ENCODE measurements at regions of chr14 and their contacts with region 1.

Region 1: GRCh38 chr14:51780006-51780692 is 80.3 kb upstream of the GNG2 start:
- DNase-seq: peak; percentile 77
- H3K4me3 Mint-ChIP-seq: no peak overlapping the region
- H3K27ac Mint-ChIP-seq: no peak overlapping the region
- H3K4me1 Mint-ChIP-seq: peaks cover 23% of the 10 kb centered on the region
- H3K27me3 Mint-ChIP-seq: no peaks in the 10 kb centered on the region
- CTCF ChIP-seq: peak; percentile 68

Region 2: DNA sequence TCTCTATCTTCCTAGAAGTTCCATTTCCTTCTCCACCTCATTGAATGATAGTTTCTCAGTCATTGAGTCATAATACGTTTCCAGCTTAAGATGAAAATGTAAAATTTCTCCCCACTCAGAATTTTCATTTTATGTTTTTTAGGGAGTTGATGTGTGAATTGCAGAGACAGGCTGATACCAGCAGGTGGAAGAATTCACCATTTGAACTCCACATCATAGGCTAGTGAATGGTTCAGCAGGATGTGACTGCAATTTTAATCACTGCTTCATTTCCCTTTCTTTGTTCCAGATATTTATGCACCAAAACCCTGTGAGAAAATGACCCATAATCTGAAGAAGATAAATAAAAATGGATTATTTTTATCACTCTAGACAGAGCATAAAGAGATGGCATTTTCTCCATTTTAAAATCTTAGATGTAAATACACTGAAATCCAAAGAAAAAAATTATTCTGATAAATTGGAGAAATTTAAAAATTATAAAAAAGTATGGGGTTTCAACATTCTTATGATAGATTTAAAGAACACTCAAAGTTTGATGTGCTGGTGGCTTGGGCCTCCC is 825.3 kb before region 1 on chr14:
- CTCF ChIA-PET with region 1: interaction called, 3 read pairs
- POLR2A ChIA-PET with region 1: no interaction called
- intact Hi-C with region 1: loop called (anchors 1 kb)
- DNase-seq: peak; percentile 67
- H3K4me3 Mint-ChIP-seq: peak overlapping the region; percentile 24
- H3K27ac Mint-ChIP-seq: peak overlapping the region; percentile 97
- H3K4me1 Mint-ChIP-seq: peaks cover 24% of the 10 kb centered on the region
- H3K27me3 Mint-ChIP-seq: no peaks in the 10 kb centered on the region
- CTCF ChIP-seq: peak; percentile 66

Region 3: DNA sequence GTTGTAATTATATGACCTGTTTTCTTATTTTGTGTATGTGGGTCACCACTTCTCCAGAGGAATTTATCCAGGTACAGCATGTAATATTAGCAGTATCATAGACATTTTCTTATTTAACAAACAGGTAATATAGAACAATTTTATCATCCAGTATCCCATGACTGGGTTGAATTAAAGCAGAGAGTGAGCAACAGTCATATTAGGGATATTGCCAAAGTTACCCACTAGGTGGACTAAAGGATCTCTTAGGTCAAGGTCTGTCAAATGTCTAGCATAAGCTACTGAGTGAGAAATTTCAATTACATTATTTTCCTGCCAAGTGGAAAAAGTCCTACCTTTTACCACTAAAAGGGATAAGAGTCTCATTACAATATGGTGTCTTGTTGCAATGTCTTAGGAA is 623.1 kb before region 1 on chr14:
- CTCF ChIA-PET with region 1: no interaction called
- POLR2A ChIA-PET with region 1: no interaction called
- intact Hi-C with region 1: loop called (anchors 5 kb)
- DNase-seq: peak; percentile 44
- H3K4me3 Mint-ChIP-seq: no peak overlapping the region
- H3K27ac Mint-ChIP-seq: no peak overlapping the region
- H3K4me1 Mint-ChIP-seq: no peaks in the 10 kb centered on the region
- H3K27me3 Mint-ChIP-seq: no peaks in the 10 kb centered on the region
- CTCF ChIP-seq: peak; percentile 33

Region 4: GRCh38 chr14:51283402-51284085 is 496.6 kb before region 1 on chr14:
- CTCF ChIA-PET with region 1: interaction called, 283 read pairs
- POLR2A ChIA-PET with region 1: interaction called, 18 read pairs
- intact Hi-C with region 1: loop called (anchors 1 kb)
- DNase-seq: peak; percentile 84
- H3K4me3 Mint-ChIP-seq: no peak overlapping the region
- H3K27ac Mint-ChIP-seq: no peak overlapping the region
- H3K4me1 Mint-ChIP-seq: peaks cover 12% of the 10 kb centered on the region
- H3K27me3 Mint-ChIP-seq: no peaks in the 10 kb centered on the region
- CTCF ChIP-seq: peak; percentile 80

Region 5: GRCh38 chr14:51547260-51547659 is 232.9 kb before region 1 on chr14:
- CTCF ChIA-PET with region 1: interaction called, 4 read pairs
- POLR2A ChIA-PET with region 1: no interaction called
- intact Hi-C with region 1: loop called (anchors 10 kb)
- DNase-seq: peak; percentile 99
- H3K4me3 Mint-ChIP-seq: peak overlapping the region; percentile 46
- H3K27ac Mint-ChIP-seq: peak overlapping the region; percentile 94
- H3K4me1 Mint-ChIP-seq: peaks cover 45% of the 10 kb centered on the region
- H3K27me3 Mint-ChIP-seq: no peaks in the 10 kb centered on the region
- CTCF ChIP-seq: no peak

Region 6: DNA sequence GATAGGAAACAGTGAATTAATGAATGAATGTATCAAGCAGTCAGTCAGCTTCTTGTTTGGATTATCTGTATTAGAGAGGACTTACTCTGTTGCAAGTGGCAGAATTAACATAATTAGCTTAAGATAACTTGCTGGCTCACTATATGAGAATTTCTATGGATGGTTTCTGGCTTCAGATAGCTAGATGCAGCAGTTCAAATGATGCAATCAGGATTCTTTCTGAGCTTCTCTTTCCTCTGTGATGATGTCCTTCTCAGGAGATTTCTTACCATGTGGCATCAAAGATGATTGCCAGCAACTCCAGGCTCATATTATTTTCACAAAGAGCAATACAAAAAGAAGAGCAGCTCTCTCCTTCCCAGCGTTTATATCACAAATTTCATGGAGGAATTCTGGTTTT is 97.7 kb before region 1 on chr14:
- CTCF ChIA-PET with region 1: no interaction called
- POLR2A ChIA-PET with region 1: no interaction called
- intact Hi-C with region 1: no loop called
- DNase-seq: no peak
- H3K4me3 Mint-ChIP-seq: no peak overlapping the region
- H3K27ac Mint-ChIP-seq: peak overlapping the region; percentile 70
- H3K4me1 Mint-ChIP-seq: peaks cover 34% of the 10 kb centered on the region
- H3K27me3 Mint-ChIP-seq: no peaks in the 10 kb centered on the region
- CTCF ChIP-seq: no peak

Region 7: DNA sequence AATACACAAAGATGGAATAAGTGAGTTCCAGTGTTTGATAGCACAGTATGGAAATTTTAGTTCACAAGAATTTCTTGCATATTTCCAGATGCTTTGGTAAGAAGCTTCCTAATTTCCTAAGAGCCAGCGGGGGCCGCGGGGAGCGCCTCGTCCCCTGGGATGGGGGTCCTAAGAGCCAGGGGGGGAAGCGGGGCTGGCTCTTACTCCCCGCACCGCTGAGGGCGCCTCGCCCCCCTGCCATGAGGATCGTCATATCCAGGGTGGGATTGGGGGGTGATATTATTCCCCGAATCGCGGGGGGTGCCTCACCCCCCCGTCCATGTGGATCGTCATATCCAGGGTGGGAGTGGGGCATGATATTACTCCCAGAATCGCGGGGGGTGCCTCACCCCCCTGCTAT is 20.2 kb before region 1 on chr14:
- CTCF ChIA-PET with region 1: no interaction called
- POLR2A ChIA-PET with region 1: no interaction called
- intact Hi-C with region 1: no loop called
- DNase-seq: no peak
- H3K4me3 Mint-ChIP-seq: no peak overlapping the region
- H3K27ac Mint-ChIP-seq: no peak overlapping the region
- H3K4me1 Mint-ChIP-seq: no peaks in the 10 kb centered on the region
- H3K27me3 Mint-ChIP-seq: peaks cover 41% of the 10 kb centered on the region
- CTCF ChIP-seq: no peak

Region 8: GRCh38 chr14:51979088-51979709 is 199.1 kb after region 1 on chr14:
- CTCF ChIA-PET with region 1: interaction called, 16 read pairs
- POLR2A ChIA-PET with region 1: interaction called, 3 read pairs
- intact Hi-C with region 1: loop called (anchors 1 kb)
- DNase-seq: peak; percentile 80
- H3K4me3 Mint-ChIP-seq: no peak overlapping the region
- H3K27ac Mint-ChIP-seq: no peak overlapping the region
- H3K4me1 Mint-ChIP-seq: no peaks in the 10 kb centered on the region
- H3K27me3 Mint-ChIP-seq: peaks cover 29% of the 10 kb centered on the region
- CTCF ChIP-seq: peak; percentile 86

Region 9: DNA sequence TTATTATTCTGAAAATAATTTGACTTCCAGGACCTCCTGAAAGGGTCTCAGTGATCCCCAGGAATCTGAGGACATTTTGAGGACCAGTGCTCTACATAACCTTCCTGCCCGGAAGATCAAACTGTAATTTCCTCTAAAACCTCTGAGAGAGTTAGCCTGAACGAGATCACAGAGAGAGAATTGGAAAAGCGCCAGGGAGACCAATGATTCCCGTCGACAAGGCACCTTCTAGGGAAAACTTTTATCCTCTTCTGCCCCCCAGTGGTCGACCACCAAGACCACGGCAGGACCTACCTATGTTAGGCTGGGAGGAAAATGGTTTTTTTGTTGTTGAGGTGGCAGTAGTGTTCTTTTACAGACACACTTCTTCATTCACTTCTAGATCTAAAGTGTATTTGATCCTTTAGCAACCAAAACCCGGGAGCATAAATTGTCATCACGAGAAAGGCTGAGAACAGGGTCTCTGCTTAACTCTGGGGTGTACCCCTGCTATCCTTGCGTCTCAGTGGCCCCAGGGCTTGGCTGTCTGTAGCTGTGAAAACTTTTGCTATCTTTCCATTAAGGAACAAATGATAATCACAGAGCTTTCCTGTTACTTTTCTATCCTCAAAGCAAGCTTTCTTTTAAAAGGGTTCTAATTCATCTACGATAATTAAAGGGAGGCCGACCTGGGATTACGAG is 351.6 kb after region 1 on chr14:
- CTCF ChIA-PET with region 1: interaction called, 3 read pairs
- POLR2A ChIA-PET with region 1: no interaction called
- intact Hi-C with region 1: loop called (anchors 1 kb)
- DNase-seq: peak; percentile 91
- H3K4me3 Mint-ChIP-seq: no peak overlapping the region
- H3K27ac Mint-ChIP-seq: no peak overlapping the region
- H3K4me1 Mint-ChIP-seq: no peaks in the 10 kb centered on the region
- H3K27me3 Mint-ChIP-seq: no peaks in the 10 kb centered on the region
- CTCF ChIP-seq: peak; percentile 59

Measured in MCF 10A (cell line).